ENCODE measurements at regions of chr7 and their contacts with region 1.

Region 1: GRCh38 chr7:140810830-140811556 is 113.7 kb downstream of the BRAF start:
- DNase-seq: peak; percentile 62 to 78
- H3K4me3 ChIP-seq: no peak overlapping the region
- H3K4me1 ChIP-seq: peaks cover 7% of the 10 kb centered on the region
- H3K27me3 ChIP-seq: no peaks in the 10 kb centered on the region

Region 2: GRCh38 chr7:140153666-140154181 is 657.3 kb before region 1 on chr7:
- in situ Hi-C with region 1: no loop called
- DNase-seq: no peak
- H3K4me3 ChIP-seq: no peak overlapping the region
- H3K4me1 ChIP-seq: no peaks in the 10 kb centered on the region
- H3K27me3 ChIP-seq: no peaks in the 10 kb centered on the region

Region 3: DNA sequence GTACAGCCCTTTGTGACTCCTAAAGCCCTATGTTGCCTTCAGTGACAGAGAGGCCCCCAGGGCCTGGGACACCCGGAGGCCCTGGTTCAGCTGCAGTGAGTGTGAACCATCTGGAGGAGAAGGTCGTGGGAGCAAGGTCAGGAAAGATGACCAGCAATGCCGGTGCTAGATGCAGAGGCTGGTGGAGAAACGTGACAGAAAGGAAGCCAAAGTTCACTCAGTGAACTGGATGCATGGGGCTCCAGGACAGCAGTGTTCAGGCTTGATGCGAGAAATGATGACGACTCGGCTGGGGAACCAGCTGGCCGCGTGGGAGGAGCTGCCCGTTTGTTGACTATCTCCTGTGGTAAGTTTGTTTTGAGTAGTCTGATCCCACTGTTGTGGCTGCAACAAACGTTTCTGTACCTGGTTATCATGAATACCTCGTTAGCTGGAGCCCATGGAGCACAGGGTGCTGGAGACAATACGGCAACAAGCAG is 277.6 kb before region 1 on chr7:
- in situ Hi-C with region 1: no loop called
- DNase-seq: no peak
- H3K4me3 ChIP-seq: no peak overlapping the region
- H3K4me1 ChIP-seq: no peaks in the 10 kb centered on the region
- H3K27me3 ChIP-seq: no peaks in the 10 kb centered on the region

Region 4: DNA sequence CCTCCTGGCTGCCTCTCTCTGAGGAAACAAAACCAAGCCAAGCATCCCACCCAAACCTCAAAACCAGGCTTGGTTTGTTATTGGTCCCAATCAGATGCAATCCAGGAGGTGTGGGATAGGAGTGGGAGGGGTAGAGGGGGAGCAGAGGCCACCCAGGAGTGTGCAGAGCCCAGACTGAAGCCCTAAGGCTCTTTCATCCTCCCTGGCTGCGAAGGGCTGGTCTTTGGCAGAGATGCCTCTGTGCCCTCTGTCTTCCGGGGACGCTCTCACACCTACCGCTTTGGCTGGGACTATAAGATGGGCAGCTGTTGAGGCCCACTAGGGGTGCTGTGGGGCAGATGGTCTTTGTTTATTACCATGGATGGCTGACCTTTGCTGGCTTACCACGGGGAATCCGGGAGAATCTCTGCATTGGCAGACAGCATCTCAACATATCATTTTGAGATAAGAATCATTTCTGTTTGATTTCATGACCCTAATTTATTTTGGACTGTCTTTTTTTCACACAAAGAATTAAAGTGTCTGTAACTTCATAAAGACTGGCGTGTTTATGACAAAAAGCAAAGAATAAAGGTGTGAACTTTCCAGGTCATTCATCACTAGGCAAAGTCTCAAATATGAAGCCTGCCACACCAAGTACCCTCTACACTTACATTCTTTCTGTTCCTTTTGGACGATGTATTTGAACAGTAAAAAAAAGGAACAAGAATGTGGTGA is 163.9 kb before region 1 on chr7:
- in situ Hi-C with region 1: no loop called
- DNase-seq: peak; percentile 56 to 76
- H3K4me3 ChIP-seq: no peak overlapping the region
- H3K4me1 ChIP-seq: no peaks in the 10 kb centered on the region; the same call in 1 of the 2 replicates
- H3K27me3 ChIP-seq: no peaks in the 10 kb centered on the region

Region 5: GRCh38 chr7:141014524-141015395 is 203.8 kb after region 1 on chr7 and contains the start of gene MRPS33:
- in situ Hi-C with region 1: loop called (anchors 5 kb)
- DNase-seq: peak; percentile 93 to 97
- H3K4me3 ChIP-seq: peak within 1 kb of the TSS; percentile 68
- H3K4me1 ChIP-seq: peaks cover 18% of the 10 kb centered on the region
- H3K27me3 ChIP-seq: peaks cover 6% of the 10 kb centered on the region

Region 6: GRCh38 chr7:141210862-141211261 is 399.9 kb after region 1 on chr7:
- in situ Hi-C with region 1: loop called (anchors 10 kb)
- DNase-seq: no peak
- H3K4me3 ChIP-seq: no peak overlapping the region
- H3K4me1 ChIP-seq: no peaks in the 10 kb centered on the region
- H3K27me3 ChIP-seq: no peaks in the 10 kb centered on the region

Region 7: GRCh38 chr7:141533149-141533949 is 722.4 kb after region 1 on chr7:
- in situ Hi-C with region 1: loop called (anchors 25 kb)
- DNase-seq: peak; percentile 81 to 85
- H3K4me3 ChIP-seq: no peak overlapping the region
- H3K4me1 ChIP-seq: peaks cover 4% of the 10 kb centered on the region; the same call in 1 of the 2 replicates
- H3K27me3 ChIP-seq: peaks cover 5% of the 10 kb centered on the region; the same call in 1 of the 2 replicates

Measured in HAP-1 (cell line).